Right ventricle myocardium superior (tissue), 1 donor: ENCODE measurements at regions of chr2 and their contacts with region 1.

Region 1: GRCh38 chr2:231666171-231667095 is 41.9 kb upstream of the PTMA start:
- DNase-seq: peak; percentile 97
- ATAC-seq: peak; percentile 84

Region 2: GRCh38 chr2:231706731-231707624 is 40.5 kb after region 1 on chr2:
- intact Hi-C with region 1: loop called (anchors 5 kb)
- DNase-seq: peak; percentile 98
- ATAC-seq: peak; percentile 70

Region 3: GRCh38 chr2:231780909-231781797 is 114.7 kb after region 1 on chr2 and contains the start of gene PDE6D:
- intact Hi-C with region 1: no loop called
- DNase-seq: peak; percentile 99
- ATAC-seq: peak; percentile 95
- total RNA-seq, gene PDE6D: 14.7 TPM